Sigmoid colon (tissue), 7 donors: ENCODE measurements at regions of chr4 and their contacts with region 1.

Region 1: GRCh38 chr4:143335979-143336780 is 496 bp upstream of the GAB1 start:
- DNase-seq: peak; percentile 96
- H3K4me3 ChIP-seq: peak overlapping the region; percentile 58 to 99 (median 80)
- H3K27ac ChIP-seq: peak overlapping the region; percentile 90 to 99 (median 96)
- H3K4me1 ChIP-seq: peaks cover 0 to 40% (median 34%) of the 10 kb centered on the region in 4 donors
- H3K27me3 ChIP-seq: no peaks in the 10 kb centered on the region
- CTCF ChIP-seq: no peak
- EP300 ChIP-seq: no peak
- POLR2A ChIP-seq: peak in 1 of 2 donors; percentile 42

Region 2: DNA sequence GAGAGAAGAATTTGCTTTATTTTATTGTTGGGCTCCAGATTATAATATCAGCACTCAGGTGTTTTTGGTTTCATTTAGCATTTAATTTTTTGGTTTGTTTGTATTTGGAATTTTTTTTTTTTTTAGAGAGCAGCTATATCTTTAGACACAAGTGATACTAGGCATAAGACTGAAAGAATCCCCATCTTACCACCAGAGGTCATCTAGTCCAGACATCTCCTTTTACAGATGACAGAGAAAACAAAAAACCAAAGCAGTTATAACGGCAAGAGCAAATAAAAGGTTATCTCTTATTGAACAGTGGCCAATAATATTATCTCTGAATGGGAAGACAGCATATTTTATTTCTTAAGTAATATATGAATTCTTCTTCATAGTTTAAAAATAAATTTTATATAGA is 128.6 kb before region 1 on chr4:
- intact Hi-C with region 1: loop called (anchors 2 kb)
- DNase-seq: no peak
- H3K4me3 ChIP-seq: no peak overlapping the region
- H3K27ac ChIP-seq: peak overlapping the region in 1 of 4 donors; percentile 2
- H3K4me1 ChIP-seq: peaks cover 0 to 10% (median 5%) of the 10 kb centered on the region in 4 donors
- H3K27me3 ChIP-seq: no peaks in the 10 kb centered on the region
- CTCF ChIP-seq: peak; percentile 17 to 58 (median 44)
- EP300 ChIP-seq: no peak
- POLR2A ChIP-seq: no peak

Region 3: DNA sequence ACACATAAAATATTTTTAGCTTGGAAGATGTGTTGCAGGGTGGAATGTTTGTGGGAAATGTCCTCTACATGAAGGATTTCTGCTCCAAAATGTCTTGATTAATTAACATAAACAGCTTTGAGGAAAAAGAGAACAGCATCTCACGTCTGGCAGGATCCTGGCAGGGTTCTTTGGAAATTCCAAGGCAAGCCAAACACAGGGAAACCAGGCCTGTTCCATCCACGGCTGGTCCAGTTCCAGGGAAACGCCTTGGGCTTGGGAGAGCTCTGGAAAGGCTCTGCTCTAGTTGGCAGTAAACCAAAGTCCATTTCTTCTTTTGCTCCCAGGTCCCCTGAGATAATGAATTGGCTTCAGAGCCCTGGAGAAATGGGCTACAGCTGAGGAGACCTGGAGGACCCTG is 41.9 kb before region 1 on chr4:
- intact Hi-C with region 1: loop called (anchors 2 kb)
- DNase-seq: peak; percentile 97
- H3K4me3 ChIP-seq: no peak overlapping the region
- H3K27ac ChIP-seq: peak overlapping the region; percentile 50 to 72 (median 67)
- H3K4me1 ChIP-seq: peaks cover 0 to 47% (median 32%) of the 10 kb centered on the region in 4 donors
- H3K27me3 ChIP-seq: no peaks in the 10 kb centered on the region
- CTCF ChIP-seq: no peak
- EP300 ChIP-seq: peak in 3 of 4 donors; percentile 6 to 27 (median 16)
- POLR2A ChIP-seq: no peak

Region 4: GRCh38 chr4:143402776-143403552 is 66.8 kb after region 1 on chr4:
- intact Hi-C with region 1: loop called (anchors 5 kb)
- DNase-seq: no peak
- H3K4me3 ChIP-seq: no peak overlapping the region
- H3K27ac ChIP-seq: peak overlapping the region; percentile 4 to 53 (median 49)
- H3K4me1 ChIP-seq: peaks cover 0 to 91% (median 62%) of the 10 kb centered on the region in 4 donors
- H3K27me3 ChIP-seq: no peaks in the 10 kb centered on the region
- CTCF ChIP-seq: no peak
- EP300 ChIP-seq: no peak
- POLR2A ChIP-seq: no peak

Region 5: GRCh38 chr4:143513306-143514168 is 177.4 kb after region 1 on chr4 and contains the start of gene SMARCA5:
- intact Hi-C with region 1: loop called (anchors 2 kb)
- DNase-seq: peak; percentile 99
- H3K4me3 ChIP-seq: peak within 1 kb of the TSS; percentile 81 to 98 (median 94)
- H3K27ac ChIP-seq: peak within 1 kb of the TSS; percentile 96 to 100 (median 98)
- H3K4me1 ChIP-seq: peaks cover 0 to 40% (median 35%) of the 10 kb centered on the region in 4 donors
- H3K27me3 ChIP-seq: no peaks in the 10 kb centered on the region
- CTCF ChIP-seq: no peak
- EP300 ChIP-seq: no peak
- POLR2A ChIP-seq: peak; percentile 93 to 94
- total RNA-seq, gene SMARCA5: 35.3 to 46.4 (median 41.8) TPM